Heart left ventricle (tissue), 16 donors: ENCODE measurements at regions of chr6 and their contacts with region 1.

Region 1: GRCh38 chr6:36123257-36124139 is 6.8 kb upstream of the MAPK13 start:
- DNase-seq: peak; percentile 72 to 89 (median 80)
- ATAC-seq: peak; percentile 47 to 85 (median 80)
- H3K4me3 ChIP-seq: peak overlapping the region in 1 of 12 donors; percentile 1
- H3K27ac ChIP-seq: peak overlapping the region in 1 of 12 donors; percentile 63
- H3K4me1 ChIP-seq: peaks cover 0 to 75% (median 11%) of the 10 kb centered on the region in 12 donors
- H3K27me3 ChIP-seq: no peaks in the 10 kb centered on the region
- CTCF ChIP-seq: peak; percentile 37 to 67 (median 56)
- POLR2A ChIP-seq: no peak

Region 2: GRCh38 chr6:35911871-35912653 is 211.4 kb before region 1 on chr6:
- intact Hi-C with region 1: no loop called
- DNase-seq: no peak
- ATAC-seq: no peak
- H3K4me3 ChIP-seq: no peak overlapping the region
- H3K27ac ChIP-seq: no peak overlapping the region
- H3K4me1 ChIP-seq: no peaks in the 10 kb centered on the region
- H3K27me3 ChIP-seq: no peaks in the 10 kb centered on the region
- CTCF ChIP-seq: no peak
- POLR2A ChIP-seq: no peak

Region 3: DNA sequence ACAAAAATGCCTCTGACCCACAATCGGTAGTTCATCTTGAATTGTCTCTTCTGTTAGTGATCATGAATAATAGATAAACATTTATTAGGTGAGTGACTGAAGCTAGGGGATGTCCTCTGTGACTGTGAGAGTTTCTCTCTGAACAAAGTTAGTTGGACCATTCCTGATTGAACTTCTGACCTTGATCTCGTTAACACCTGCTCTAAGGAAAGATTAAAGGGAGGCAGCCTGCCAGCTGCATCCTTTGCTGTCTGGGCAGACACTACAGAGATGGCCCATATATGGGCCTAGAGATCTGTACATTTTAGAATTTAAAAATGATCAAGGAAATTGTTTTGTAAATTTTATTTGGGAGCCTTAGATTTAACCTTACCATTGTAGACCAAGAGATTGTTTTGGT is 68.5 kb before region 1 on chr6:
- intact Hi-C with region 1: no loop called
- DNase-seq: no peak
- ATAC-seq: no peak
- H3K4me3 ChIP-seq: no peak overlapping the region
- H3K27ac ChIP-seq: no peak overlapping the region
- H3K4me1 ChIP-seq: peaks cover 0 to 47% (median 29%) of the 10 kb centered on the region in 12 donors
- H3K27me3 ChIP-seq: no peaks in the 10 kb centered on the region
- CTCF ChIP-seq: no peak
- POLR2A ChIP-seq: no peak

Region 4: DNA sequence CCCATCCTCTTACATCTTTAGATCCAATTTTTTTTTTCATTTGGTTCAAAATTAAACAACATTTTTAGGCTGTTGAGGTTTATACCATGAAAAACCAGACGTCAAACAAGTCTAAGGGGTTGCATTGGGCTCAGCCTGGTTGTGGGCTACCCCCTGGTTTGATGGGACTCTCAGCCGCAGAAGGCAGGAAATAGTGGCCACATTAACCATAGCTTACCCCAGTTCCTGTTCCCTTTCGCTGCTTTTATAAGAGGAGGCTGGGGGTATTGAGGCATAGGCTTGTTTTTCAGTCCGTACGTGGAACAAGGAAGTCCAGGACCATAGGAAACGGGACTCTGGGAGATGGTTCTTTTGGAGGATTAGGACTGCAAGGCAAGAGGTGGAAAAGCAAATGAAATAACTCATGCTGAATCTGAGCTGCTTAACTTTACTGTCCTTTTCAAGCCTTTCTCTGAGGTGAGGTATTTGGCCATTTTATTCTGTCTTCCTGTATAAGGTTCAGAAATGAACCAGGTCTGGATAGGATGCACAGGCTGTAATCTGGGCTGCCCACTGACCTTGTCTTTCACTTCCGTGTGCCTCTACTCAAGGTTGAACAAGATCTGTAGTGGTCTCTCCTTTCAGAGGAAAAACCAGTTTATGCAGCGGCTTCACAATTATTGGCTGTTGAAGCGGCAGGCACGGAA is 80.7 kb after region 1 on chr6:
- intact Hi-C with region 1: loop called in 8 of 10 experiments (anchors 5 kb)
- DNase-seq: no peak
- ATAC-seq: peak in 1 of 4 donors; percentile 28
- H3K4me3 ChIP-seq: no peak overlapping the region
- H3K27ac ChIP-seq: no peak overlapping the region
- H3K4me1 ChIP-seq: peaks cover 0 to 38% (median 5%) of the 10 kb centered on the region in 12 donors
- H3K27me3 ChIP-seq: no peaks in the 10 kb centered on the region
- CTCF ChIP-seq: no peak
- POLR2A ChIP-seq: no peak

Region 5: DNA sequence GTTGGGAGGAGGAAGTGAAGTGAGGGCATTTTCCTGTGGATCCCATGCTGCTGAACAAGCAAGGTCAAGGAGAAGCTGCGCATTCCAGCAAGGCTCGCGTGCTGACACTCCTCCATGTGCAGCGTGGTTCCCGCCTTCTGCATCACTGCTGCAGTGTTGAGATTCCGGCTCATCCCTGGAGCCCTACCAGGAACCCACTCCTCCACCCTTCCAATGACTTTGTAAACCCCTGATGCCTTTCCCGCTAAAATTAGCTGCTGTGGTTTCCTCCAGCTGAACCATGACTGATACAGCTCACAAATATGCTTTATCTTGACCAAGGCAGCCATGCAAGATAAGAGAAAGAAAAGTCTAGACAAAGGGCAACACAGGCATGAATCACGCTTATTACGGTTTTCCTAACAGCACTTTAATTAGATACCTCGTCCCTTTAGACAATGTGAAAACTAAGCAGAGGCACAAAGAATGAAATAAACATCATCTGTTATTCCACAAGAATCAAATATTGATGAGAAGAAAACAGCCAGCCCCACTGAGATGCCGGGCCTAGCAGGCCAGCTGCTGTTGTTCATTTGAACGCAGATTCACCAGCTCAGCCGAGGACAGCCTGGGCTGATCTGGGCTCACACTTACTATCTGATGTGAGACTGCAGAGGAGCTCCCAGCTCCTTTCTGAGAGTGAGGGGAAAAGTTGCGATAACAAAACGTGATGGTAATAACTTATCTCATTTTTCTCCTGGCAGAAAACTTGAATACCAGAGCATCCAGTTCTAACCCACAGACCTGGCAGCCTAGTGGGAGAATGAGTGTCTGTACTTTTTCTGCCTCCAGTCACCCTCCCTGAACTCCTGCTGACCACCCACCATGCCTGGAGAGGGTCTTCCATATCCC is 227.4 kb after region 1 on chr6:
- intact Hi-C with region 1: loop called in 3 of 10 experiments (anchors 10 kb)
- DNase-seq: peak in 1 of 5 donors; percentile 59
- ATAC-seq: peak; percentile 20 to 90 (median 72)
- H3K4me3 ChIP-seq: no peak overlapping the region
- H3K27ac ChIP-seq: peak overlapping the region in 5 of 12 donors; percentile 3 to 63 (median 14)
- H3K4me1 ChIP-seq: peaks cover 0 to 24% (median 12%) of the 10 kb centered on the region in 12 donors
- H3K27me3 ChIP-seq: peaks cover 0 to 66% (median 8%) of the 10 kb centered on the region in 9 donors
- CTCF ChIP-seq: no peak
- POLR2A ChIP-seq: no peak